ENCODE measurements at regions of chr20 and their contacts with region 1.

Region 1: GRCh38 chr20:49936153-49937027 is at the start of gene RNF114:
- DNase-seq: peak; percentile 96
- H3K4me3 Mint-ChIP-seq: peak within 1 kb of the TSS; percentile 96
- H3K27ac Mint-ChIP-seq: peak within 1 kb of the TSS; percentile 65
- H3K4me1 Mint-ChIP-seq: peaks cover 31% of the 10 kb centered on the region
- H3K27me3 Mint-ChIP-seq: no peaks in the 10 kb centered on the region
- CTCF ChIP-seq: no peak
- total RNA-seq, gene RNF114: 72.3 and 93.9 TPM in 2 replicates

Region 2: GRCh38 chr20:49915378-49916145 is 20.8 kb before region 1 on chr20 and contains the start of gene SPATA2:
- CTCF ChIA-PET with region 1: interaction called, 12 read pairs
- intact Hi-C with region 1: no loop called
- DNase-seq: peak; percentile 98
- H3K4me3 Mint-ChIP-seq: peak within 1 kb of the TSS; percentile 95
- H3K27ac Mint-ChIP-seq: peak within 1 kb of the TSS; percentile 99
- H3K4me1 Mint-ChIP-seq: peaks cover 50% of the 10 kb centered on the region
- H3K27me3 Mint-ChIP-seq: no peaks in the 10 kb centered on the region
- CTCF ChIP-seq: no peak
- total RNA-seq, gene SPATA2: 16.0 and 16.6 TPM in 2 replicates

Measured in Calu3 (cell line).